CD14-positive monocyte (primary cell): ENCODE measurements at regions of chr4 and their contacts with region 1.

Region 1: DNA sequence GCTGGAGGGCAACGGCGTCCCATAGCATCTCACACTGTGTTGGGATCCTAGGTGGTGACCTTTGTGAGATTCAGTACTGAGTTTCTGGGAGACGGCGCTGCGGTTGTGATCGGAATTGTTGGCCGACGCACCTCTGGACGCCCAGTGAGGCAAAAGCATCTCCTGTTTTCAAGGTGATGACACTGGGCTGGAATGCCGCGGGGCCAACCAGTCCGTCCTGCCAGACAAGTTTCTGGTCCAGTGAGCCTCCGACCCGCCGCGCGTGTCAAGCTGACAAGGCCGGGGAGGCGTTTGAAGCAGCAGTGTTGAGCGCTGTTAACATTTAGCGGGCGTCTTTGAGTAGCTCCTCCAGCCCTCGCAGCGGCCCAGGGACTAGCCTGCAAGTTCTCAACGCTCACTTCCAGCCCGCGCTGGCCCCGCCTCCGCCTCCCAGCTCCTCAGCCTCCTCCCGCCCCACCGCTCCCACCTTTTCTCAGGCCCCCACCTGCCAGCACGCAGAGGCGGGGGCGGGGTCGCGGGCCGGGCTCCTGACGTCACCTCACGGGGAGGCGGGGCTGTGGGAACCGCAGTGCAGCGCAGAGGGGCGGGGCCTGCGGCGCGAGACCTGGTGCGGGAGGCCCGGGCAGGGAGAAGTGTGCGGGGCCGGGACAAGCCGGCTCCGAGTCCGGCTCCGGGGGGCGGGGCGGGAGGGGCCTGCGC is 476 bp upstream of the CDS1 start:
- DNase-seq: peak; percentile 66 to 75 (median 70)
- H3K4me3 ChIP-seq: peak overlapping the region; percentile 63 to 78 (median 77)
- H3K4me3 Mint-ChIP-seq: peak overlapping the region; percentile 82 to 90
- H3K27ac ChIP-seq: no peak overlapping the region
- H3K27ac Mint-ChIP-seq: peak overlapping the region in 6 of 7 donors; percentile 41 to 80 (median 52)
- H3K4me1 ChIP-seq: peaks cover 21 to 25% of the 10 kb centered on the region in 2 donors
- H3K4me1 Mint-ChIP-seq: peaks cover 22% of the 10 kb centered on the region
- H3K27me3 ChIP-seq: peaks cover 32 to 49% of the 10 kb centered on the region in 2 donors
- H3K27me3 Mint-ChIP-seq: peaks cover 25 to 51% (median 45%) of the 10 kb centered on the region in 3 donors
- CTCF ChIP-seq: no peak

Region 2: GRCh38 chr4:84681486-84682274 is 99.2 kb after region 1 on chr4:
- intact Hi-C with region 1: loop called in 1 of 2 experiments (anchors 5 kb)
- DNase-seq: peak; percentile 23 to 35 (median 25)
- H3K4me3 ChIP-seq: peak overlapping the region in 1 of 3 experiments; percentile 3
- H3K4me3 Mint-ChIP-seq: no peak overlapping the region
- H3K27ac ChIP-seq: peak overlapping the region in 1 of 2 donors; percentile 57
- H3K27ac Mint-ChIP-seq: peak overlapping the region in 5 of 7 donors; percentile 12 to 42 (median 35)
- H3K4me1 ChIP-seq: peaks cover 24 to 28% of the 10 kb centered on the region in 2 donors
- H3K4me1 Mint-ChIP-seq: peaks cover 31% of the 10 kb centered on the region
- H3K27me3 ChIP-seq: no peaks in the 10 kb centered on the region
- H3K27me3 Mint-ChIP-seq: no peaks in the 10 kb centered on the region
- CTCF ChIP-seq: no peak